ENCODE measurements at regions of chr10 and their contacts with region 1.

Region 1: GRCh38 chr10:127853868-127854768 is 38.6 kb downstream of the CLRN3 start:
- DNase-seq: peak; percentile 59 to 84 (median 68)
- ATAC-seq: peak; percentile 72 to 94 (median 92)
- H3K4me3 ChIP-seq: no peak overlapping the region
- H3K27ac ChIP-seq: no peak overlapping the region
- H3K4me1 ChIP-seq: peaks cover 0 to 9% (median 0%) of the 10 kb centered on the region in 12 donors
- H3K27me3 ChIP-seq: peaks cover 0 to 17% (median 0%) of the 10 kb centered on the region in 9 donors
- CTCF ChIP-seq: peak; percentile 74 to 93 (median 84)
- POLR2A ChIP-seq: no peak

Region 2: DNA sequence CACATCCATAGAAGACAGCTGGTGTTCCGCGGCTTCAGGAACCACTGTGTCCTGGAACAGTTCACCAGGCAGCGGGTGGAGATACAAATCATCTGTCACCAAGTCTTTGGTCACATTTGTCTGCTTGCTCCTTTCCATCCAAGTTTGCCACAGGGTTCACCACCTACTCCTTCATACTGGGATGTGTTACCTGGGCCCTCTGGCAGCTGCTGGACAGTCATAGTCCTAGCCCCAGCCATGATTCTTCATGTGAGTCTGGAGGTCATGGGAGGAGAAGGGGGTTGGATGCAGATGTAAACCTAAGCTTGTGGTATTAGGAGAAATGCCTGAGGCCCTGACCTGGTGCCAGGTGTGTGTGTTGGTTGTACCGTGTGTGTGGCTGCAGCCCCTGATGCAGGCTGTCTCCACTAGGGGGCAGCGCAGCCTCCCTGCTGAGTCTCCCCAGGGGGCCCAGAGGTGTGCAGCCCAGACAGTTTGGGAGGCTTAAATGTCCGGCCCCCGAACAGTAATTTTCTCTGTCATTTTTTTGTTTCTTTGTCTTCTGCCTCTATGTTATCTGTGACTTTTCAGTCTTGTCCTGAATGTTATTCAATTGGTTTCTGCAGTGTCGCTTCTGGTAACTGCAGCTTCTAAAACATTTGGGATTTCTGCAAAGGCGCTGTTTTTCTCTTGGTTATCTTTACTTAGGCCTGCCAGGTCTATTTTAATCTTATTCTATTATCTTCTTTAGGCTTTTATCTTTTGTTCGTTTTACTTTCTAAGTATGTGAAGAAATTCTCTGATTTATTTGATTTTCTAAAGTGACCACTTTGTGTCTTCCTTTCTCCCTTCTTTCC is 290.2 kb before region 1 on chr10:
- intact Hi-C with region 1: loop called in 2 of 10 experiments (anchors 5 to 10 kb)
- DNase-seq: no peak
- ATAC-seq: peak in 1 of 4 donors; percentile 52
- H3K4me3 ChIP-seq: no peak overlapping the region
- H3K27ac ChIP-seq: peak overlapping the region in 1 of 12 donors; percentile 14
- H3K4me1 ChIP-seq: no peaks in the 10 kb centered on the region
- H3K27me3 ChIP-seq: peaks cover 0 to 7% (median 0%) of the 10 kb centered on the region in 9 donors
- CTCF ChIP-seq: peak; percentile 31 to 68 (median 48)
- POLR2A ChIP-seq: no peak

Region 3: DNA sequence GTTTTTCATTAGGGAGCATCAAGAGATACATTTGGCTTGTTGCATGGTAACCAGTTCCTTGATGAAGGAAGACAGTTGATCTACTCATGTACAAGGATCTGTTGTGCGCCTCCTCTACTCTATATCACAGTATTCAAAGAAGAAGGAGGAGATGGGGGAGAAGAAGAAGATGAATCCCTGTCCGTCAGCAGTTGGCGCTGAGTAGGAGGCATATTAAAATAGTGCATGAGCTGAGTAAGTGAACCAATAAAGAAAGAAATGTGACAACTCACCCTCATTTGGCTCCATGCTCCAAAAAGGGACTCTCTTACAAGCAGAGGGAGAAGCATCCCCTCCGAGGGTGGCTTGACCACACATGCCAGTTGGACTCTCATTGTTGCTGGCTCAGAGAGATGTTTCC is 284.9 kb before region 1 on chr10:
- intact Hi-C with region 1: loop called in 2 of 10 experiments (anchors 5 to 10 kb)
- DNase-seq: no peak
- ATAC-seq: no peak
- H3K4me3 ChIP-seq: no peak overlapping the region
- H3K27ac ChIP-seq: no peak overlapping the region
- H3K4me1 ChIP-seq: peaks cover 0 to 6% (median 0%) of the 10 kb centered on the region in 12 donors
- H3K27me3 ChIP-seq: peaks cover 0 to 2% (median 0%) of the 10 kb centered on the region in 9 donors
- CTCF ChIP-seq: no peak
- POLR2A ChIP-seq: no peak

Region 4: DNA sequence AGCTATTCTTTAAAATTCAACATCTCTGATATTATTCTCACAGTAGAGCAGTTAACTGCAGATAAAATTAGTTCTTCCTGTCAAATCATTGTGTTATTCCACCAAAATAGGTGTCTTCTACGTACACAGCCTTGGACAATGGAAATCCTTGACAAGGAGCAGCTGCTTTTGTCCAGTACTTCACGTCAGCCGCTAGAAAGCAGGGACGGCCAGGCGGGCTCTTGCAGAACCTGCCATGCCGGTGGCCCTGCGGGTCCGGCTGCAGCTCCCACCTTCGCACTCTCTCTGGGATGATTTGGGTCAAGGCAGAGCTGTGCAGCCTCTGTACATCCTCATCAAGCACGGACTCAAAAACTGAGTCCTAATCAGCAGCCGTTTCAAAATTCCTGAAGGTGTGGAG is 119.4 kb before region 1 on chr10:
- intact Hi-C with region 1: no loop called
- DNase-seq: no peak
- ATAC-seq: peak in 1 of 4 donors; percentile 63
- H3K4me3 ChIP-seq: peak overlapping the region in 3 of 12 donors; percentile 4 to 49 (median 15)
- H3K27ac ChIP-seq: peak overlapping the region in 3 of 12 donors; percentile 34 to 79 (median 55)
- H3K4me1 ChIP-seq: peaks cover 0 to 34% (median 3%) of the 10 kb centered on the region in 12 donors
- H3K27me3 ChIP-seq: peaks cover 24 to 80% (median 62%) of the 10 kb centered on the region in 9 donors
- CTCF ChIP-seq: no peak
- POLR2A ChIP-seq: no peak